B cell (primary cell): ENCODE measurements at regions of chr13 and their contacts with region 1.

Region 1: DNA sequence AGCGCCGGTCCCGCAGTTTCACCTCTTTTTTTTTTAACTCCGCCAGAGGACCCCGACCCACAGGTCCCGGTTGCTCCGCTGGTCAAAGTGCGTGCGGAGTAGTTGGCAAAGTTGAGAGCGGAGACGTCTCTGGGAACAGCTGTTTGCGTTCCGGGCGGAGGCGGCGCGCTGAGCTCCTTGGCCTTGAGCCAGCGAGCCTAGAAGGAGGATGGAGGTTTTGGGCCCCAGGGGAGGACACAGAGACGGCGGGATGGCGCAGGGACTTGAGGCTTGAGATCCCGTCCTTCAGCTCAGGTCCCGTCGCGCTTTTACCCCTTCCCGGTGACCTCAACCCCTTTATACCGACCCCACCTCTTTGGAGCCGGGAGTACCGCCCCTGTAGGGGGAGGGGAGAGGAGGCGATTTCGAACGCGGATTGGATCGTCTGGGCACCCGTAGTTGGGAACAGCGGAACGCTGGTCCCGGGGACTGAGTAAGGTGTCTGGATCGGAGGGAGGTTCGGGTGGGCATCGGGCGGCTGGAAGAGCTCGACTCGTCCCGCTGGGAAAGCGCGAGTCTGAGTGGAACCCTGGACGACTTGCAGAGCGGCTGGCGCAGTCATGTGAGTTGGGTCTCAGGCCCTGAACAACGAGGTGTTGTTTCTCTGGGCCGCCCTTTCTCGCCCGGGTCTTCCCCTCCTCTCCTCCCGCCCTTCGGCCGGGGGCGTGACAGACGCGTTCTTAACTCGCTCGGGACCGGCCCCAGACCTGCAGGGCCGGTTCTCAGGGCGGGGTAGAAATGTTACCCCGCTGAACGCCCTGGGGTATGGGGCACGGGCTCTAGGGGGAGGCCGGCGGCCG is at the start of gene WBP4:
- DNase-seq: peak; percentile 97
- ATAC-seq: peak; percentile 70
- H3K4me3 ChIP-seq: peak within 1 kb of the TSS; percentile 83 to 99 (median 98)
- H3K4me3 Mint-ChIP-seq: peak within 1 kb of the TSS; percentile 100
- H3K27ac ChIP-seq: peak within 1 kb of the TSS; percentile 86 to 91
- H3K27ac Mint-ChIP-seq: peak within 1 kb of the TSS; percentile 100
- H3K4me1 ChIP-seq: peaks cover 12 to 14% of the 10 kb centered on the region in 2 donors
- H3K4me1 Mint-ChIP-seq: peaks cover 39% of the 10 kb centered on the region
- H3K27me3 ChIP-seq: no peaks in the 10 kb centered on the region
- H3K27me3 Mint-ChIP-seq: no peaks in the 10 kb centered on the region
- CTCF ChIP-seq: no peak
- total RNA-seq, gene WBP4: 10.4 and 10.6 TPM in 2 replicates

Region 2: GRCh38 chr13:40922437-40923040 is 138.8 kb before region 1 on chr13:
- CTCF ChIA-PET with region 1: interaction called, 9 read pairs
- POLR2A ChIA-PET with region 1: no interaction called
- intact Hi-C with region 1: loop called (anchors 1 kb)
- DNase-seq: no peak
- ATAC-seq: no peak
- H3K4me3 ChIP-seq: no peak overlapping the region
- H3K4me3 Mint-ChIP-seq: peak overlapping the region; percentile 94
- H3K27ac ChIP-seq: no peak overlapping the region
- H3K27ac Mint-ChIP-seq: peak overlapping the region; percentile 67
- H3K4me1 ChIP-seq: peaks cover 9 to 16% of the 10 kb centered on the region in 2 donors
- H3K4me1 Mint-ChIP-seq: peaks cover 21% of the 10 kb centered on the region
- H3K27me3 ChIP-seq: no peaks in the 10 kb centered on the region
- H3K27me3 Mint-ChIP-seq: no peaks in the 10 kb centered on the region
- CTCF ChIP-seq: no peak

Region 3: DNA sequence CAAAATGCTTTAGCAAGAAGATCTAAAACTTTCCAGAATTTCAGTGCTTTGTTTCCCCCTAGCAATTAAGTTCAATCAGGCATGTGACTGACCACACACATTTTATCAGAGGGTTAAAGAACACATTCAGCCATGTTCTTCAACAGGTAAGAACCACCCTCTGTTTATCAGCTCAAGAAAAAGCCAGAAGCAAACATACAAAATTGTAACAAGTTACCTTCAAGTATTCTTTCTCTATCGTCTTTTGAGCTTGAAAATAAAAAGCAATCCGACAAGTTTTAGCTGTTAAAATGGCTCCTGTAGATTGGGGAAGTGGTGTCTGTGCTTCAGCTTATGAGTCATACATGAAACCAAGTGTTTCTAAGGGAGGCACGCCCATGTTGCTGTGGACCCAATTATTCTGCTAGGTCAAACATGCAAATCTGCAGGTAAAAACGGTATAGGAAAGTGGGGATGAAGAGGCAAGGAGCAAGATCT is 42.2 kb before region 1 on chr13 and contains the start of gene ELF1:
- CTCF ChIA-PET with region 1: interaction called, 31 read pairs
- POLR2A ChIA-PET with region 1: interaction called, 32 read pairs
- intact Hi-C with region 1: loop called (anchors 1 kb)
- DNase-seq: peak; percentile 91
- ATAC-seq: peak; percentile 89
- H3K4me3 ChIP-seq: peak within 1 kb of the TSS; percentile 65 to 99 (median 75)
- H3K4me3 Mint-ChIP-seq: peak within 1 kb of the TSS; percentile 94
- H3K27ac ChIP-seq: peak within 1 kb of the TSS; percentile 96 to 100
- H3K27ac Mint-ChIP-seq: peak within 1 kb of the TSS; percentile 98
- H3K4me1 ChIP-seq: peaks cover 29 to 33% of the 10 kb centered on the region in 2 donors
- H3K4me1 Mint-ChIP-seq: peaks cover 52% of the 10 kb centered on the region
- H3K27me3 ChIP-seq: no peaks in the 10 kb centered on the region
- H3K27me3 Mint-ChIP-seq: no peaks in the 10 kb centered on the region
- CTCF ChIP-seq: no peak
- total RNA-seq, gene ELF1: 185 and 186 TPM in 2 replicates

Region 4: DNA sequence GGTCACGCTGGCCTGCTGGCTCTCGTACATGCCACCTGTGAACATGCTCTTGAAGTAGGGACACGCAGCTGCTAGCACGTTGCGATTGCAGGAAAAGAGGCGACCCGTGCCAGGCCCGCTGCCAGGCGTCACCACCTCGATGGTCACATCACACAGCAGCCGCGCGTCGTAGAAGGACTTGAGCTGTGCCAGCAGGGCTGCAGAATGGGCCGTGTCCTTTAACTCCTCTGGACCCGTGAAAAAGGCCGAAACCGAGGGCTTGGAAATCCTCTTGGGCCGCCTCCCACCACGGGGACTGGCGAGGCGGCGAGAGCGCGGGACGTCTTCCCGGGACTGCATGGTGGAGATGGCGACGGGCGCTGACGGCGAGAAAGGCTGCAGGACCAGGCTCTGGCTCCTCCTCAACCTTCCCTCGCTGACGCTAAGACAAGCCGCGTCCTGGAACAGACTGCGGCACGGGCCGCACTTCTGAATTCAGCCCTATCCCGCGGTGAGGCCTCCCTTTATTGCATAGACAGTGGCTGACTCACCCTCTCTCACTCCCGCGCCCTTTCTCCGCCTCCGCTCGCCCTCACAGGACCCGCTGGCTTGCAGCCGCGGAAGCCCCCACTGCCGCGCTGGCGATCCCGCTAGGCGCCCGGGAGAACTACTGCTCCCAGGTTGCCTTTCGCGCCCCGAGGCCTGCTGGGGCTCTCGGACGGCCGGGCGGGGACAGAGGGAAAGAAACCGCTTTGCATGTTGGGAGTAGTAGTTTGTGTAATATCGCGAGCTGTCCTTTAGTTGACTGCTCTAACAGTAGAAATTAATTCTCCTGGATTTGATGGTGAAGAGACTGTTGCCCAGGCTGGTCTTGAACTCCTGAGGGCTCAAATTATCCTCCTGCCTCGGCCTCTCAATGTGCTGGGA is 132.9 kb after region 1 on chr13 and contains the start of gene KBTBD7:
- CTCF ChIA-PET with region 1: no interaction called
- POLR2A ChIA-PET with region 1: interaction called, 11 read pairs
- intact Hi-C with region 1: loop called (anchors 1 kb)
- DNase-seq: peak; percentile 90
- ATAC-seq: peak; percentile 94
- H3K4me3 ChIP-seq: peak within 1 kb of the TSS; percentile 59 to 92 (median 88)
- H3K4me3 Mint-ChIP-seq: peak within 1 kb of the TSS; percentile 96
- H3K27ac ChIP-seq: peak within 1 kb of the TSS; percentile 32 to 63
- H3K27ac Mint-ChIP-seq: peak within 1 kb of the TSS; percentile 94
- H3K4me1 ChIP-seq: peaks cover 33 to 34% of the 10 kb centered on the region in 2 donors
- H3K4me1 Mint-ChIP-seq: peaks cover 45% of the 10 kb centered on the region
- H3K27me3 ChIP-seq: no peaks in the 10 kb centered on the region
- H3K27me3 Mint-ChIP-seq: no peaks in the 10 kb centered on the region
- CTCF ChIP-seq: no peak
- total RNA-seq, gene KBTBD7: 8.4 and 9.2 TPM in 2 replicates

Region 5: GRCh38 chr13:41310963-41311606 is 249.8 kb after region 1 on chr13 and contains the start of gene NAA16:
- CTCF ChIA-PET with region 1: no interaction called
- POLR2A ChIA-PET with region 1: no interaction called
- intact Hi-C with region 1: loop called (anchors 2 kb)
- DNase-seq: peak; percentile 94
- ATAC-seq: peak; percentile 85
- H3K4me3 ChIP-seq: peak within 1 kb of the TSS; percentile 93 to 100 (median 99)
- H3K4me3 Mint-ChIP-seq: peak within 1 kb of the TSS; percentile 95
- H3K27ac ChIP-seq: peak within 1 kb of the TSS; percentile 80 to 83
- H3K27ac Mint-ChIP-seq: peak within 1 kb of the TSS; percentile 96
- H3K4me1 ChIP-seq: peaks cover 26 to 27% of the 10 kb centered on the region in 2 donors
- H3K4me1 Mint-ChIP-seq: peaks cover 39% of the 10 kb centered on the region
- H3K27me3 ChIP-seq: no peaks in the 10 kb centered on the region
- H3K27me3 Mint-ChIP-seq: no peaks in the 10 kb centered on the region
- CTCF ChIP-seq: no peak
- total RNA-seq, gene NAA16: 32.5 and 33.5 TPM in 2 replicates